Natural killer cell (primary cell): ENCODE measurements at regions of chr7 and their contacts with region 1.

Region 1: DNA sequence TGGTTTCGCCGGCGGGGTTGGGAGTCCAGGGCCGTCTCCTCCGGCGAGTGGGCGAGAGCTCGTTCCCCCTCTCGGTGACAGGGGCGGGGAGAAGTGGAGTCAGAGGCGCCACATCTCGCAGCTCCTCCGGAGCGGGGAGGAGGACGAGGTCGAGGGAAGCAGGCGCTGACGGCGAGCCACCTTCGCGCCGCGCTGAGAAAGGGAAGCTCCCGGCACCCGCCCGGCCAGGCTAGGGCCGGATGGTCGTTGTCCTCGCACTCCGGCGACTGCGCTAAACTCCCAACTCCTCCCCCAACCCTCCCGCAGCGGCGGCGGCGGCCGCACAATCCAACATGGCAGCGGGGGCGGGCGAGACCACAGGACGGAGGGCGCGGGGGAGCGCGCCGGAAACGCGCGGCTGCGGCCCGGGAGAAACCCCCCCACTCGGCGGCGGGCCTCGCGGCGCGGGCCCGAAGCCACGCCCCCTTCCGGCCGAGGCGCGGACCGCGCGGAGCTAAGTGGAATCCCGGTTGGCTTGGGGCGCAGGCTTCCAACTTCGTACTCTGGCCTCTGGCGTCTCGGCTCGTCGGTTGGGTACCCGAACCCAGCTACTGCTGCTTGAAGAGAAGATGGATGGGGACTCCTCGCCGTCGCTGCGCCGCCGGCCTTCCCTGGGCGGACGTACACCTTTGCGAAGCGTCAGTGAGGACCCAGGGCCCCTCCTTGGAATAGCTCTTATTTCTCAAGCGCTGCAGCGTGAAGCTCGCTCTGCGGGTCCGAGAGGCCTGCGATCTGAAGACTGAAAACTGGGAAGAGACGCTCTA is at the start of gene WASL:
- DNase-seq: peak; percentile 86 to 94
- ATAC-seq: peak; percentile 79 to 93 (median 85)
- H3K4me3 ChIP-seq: peak within 1 kb of the TSS; percentile 83
- H3K4me3 Mint-ChIP-seq: peak within 1 kb of the TSS; percentile 94
- H3K27ac ChIP-seq: peak within 1 kb of the TSS; percentile 90
- H3K27ac Mint-ChIP-seq: peak within 1 kb of the TSS; percentile 92
- H3K4me1 ChIP-seq: peaks cover 15% of the 10 kb centered on the region
- H3K4me1 Mint-ChIP-seq: peaks cover 43 to 54% of the 10 kb centered on the region in 2 donors
- H3K27me3 ChIP-seq: no peaks in the 10 kb centered on the region
- H3K27me3 Mint-ChIP-seq: no peaks in the 10 kb centered on the region
- CTCF ChIP-seq: no peak
- total RNA-seq, gene WASL: 9.6 to 12.1 (median 10.6) TPM

Region 2: DNA sequence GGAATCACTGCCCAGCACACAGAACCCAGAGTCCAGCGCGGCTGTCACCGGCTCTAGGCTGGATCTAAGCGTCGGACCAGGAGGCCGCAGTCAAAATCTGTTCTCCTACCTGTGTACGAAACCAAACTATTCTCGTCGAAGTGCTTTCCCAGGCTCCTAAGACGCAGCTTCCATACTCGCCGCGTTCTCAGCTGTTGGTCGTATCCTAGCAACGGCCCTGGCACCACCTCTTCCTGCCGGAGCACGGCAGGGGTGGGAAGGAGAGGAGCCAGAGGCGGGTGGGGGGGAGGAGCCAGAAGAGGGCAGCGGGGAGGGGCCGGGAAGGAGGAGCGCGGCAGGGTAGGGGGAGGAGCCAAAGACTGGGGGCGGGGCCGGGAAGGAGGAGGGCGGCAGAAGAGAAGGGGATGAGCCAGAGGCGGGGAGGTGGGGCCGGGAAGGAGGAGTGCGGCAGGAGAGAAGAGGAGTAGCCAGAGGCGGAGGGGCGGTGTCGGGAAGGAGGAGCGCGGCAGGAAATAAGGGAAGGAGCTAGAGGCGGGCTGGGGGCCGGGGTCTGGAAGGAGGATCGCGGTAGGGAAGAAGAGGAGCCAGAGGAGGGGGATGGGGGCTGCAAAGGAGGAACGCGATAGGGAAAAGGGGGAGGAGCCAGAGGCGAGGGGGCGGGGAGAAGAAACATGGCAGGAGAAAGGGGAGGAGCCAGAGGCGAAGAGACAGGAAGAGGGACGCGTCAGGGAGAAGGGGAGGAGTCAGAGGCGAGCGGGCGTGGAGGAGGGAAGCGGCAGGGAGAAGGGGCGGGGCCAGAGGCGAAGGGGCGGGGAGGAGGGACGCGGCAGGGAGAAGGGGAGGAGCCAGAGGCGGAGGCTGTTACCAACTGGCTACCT is 214.3 kb before region 1 on chr7 and contains the start of gene IQUB:
- intact Hi-C with region 1: loop called (anchors 5 kb)
- DNase-seq: peak; percentile 85 to 97
- ATAC-seq: peak; percentile 87 to 96 (median 90)
- H3K4me3 ChIP-seq: peak within 1 kb of the TSS; percentile 82
- H3K4me3 Mint-ChIP-seq: peak within 1 kb of the TSS; percentile 97
- H3K27ac ChIP-seq: peak within 1 kb of the TSS; percentile 71
- H3K27ac Mint-ChIP-seq: peak within 1 kb of the TSS; percentile 88 to 94
- H3K4me1 ChIP-seq: peaks cover 18% of the 10 kb centered on the region
- H3K4me1 Mint-ChIP-seq: peaks cover 18 to 25% of the 10 kb centered on the region in 2 donors
- H3K27me3 ChIP-seq: peaks cover 2% of the 10 kb centered on the region
- H3K27me3 Mint-ChIP-seq: peaks cover 6% of the 10 kb centered on the region in 2 donors
- CTCF ChIP-seq: no peak
- total RNA-seq, gene IQUB: 0.09 to 0.45 (median 0.18) TPM

Region 3: DNA sequence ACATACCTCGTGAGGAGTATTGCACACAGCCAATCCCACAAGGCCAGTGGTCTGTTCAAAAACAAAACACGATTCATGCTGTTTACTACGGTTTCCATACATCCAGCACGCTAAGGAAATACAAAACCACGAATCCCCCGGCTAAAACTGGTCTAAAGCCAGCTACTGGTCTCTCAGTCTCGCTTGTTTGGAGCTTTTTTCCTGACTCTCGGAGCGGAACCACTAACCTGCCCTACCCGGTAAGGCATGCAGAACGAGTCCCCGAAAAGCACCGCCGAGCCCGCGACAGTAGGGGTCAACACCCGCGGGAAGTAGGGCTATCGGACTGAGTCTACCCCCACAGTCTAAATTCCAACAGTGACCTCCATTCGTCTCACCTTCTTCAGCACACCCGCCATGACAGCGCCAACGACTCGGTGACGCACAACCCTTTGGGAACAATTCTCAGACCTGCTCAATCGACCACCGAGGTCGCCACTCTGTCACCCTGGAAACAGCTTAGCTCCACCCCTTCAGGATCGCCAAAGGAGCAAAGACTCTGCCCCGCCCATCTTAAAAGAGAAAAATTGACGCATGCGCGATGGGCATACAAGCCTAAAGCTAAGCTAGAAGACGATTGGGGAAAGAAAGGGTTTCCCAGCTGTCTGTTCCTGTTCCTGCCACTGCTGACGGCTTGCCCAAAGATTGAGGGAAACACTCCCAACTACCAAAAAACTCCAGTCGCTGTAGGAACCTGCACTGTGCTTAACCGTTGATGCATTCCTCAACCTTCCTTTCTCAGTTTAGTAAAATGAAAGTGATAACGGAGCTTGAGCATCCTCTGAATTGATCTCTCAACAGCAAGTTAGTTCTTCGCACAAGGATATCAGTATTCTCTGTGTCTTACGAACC is 191.3 kb before region 1 on chr7 and contains the start of gene NDUFA5:
- intact Hi-C with region 1: loop called (anchors 2 kb)
- DNase-seq: peak; percentile 88 to 100
- ATAC-seq: peak; percentile 97 to 100 (median 99)
- H3K4me3 ChIP-seq: peak within 1 kb of the TSS; percentile 92
- H3K4me3 Mint-ChIP-seq: no peak within 1 kb of the TSS
- H3K27ac ChIP-seq: peak within 1 kb of the TSS; percentile 77
- H3K27ac Mint-ChIP-seq: no peak within 1 kb of the TSS
- H3K4me1 ChIP-seq: peaks cover 5% of the 10 kb centered on the region
- H3K4me1 Mint-ChIP-seq: peaks cover 0 to 13% of the 10 kb centered on the region in 2 donors
- H3K27me3 ChIP-seq: no peaks in the 10 kb centered on the region
- H3K27me3 Mint-ChIP-seq: peaks cover 0 to 7% of the 10 kb centered on the region in 2 donors
- CTCF ChIP-seq: no peak
- total RNA-seq, gene NDUFA5: 46.0 to 51.2 (median 50.4) TPM

Region 4: GRCh38 chr7:123588376-123588775 is 160.6 kb before region 1 on chr7:
- intact Hi-C with region 1: no loop called
- DNase-seq: no peak
- ATAC-seq: no peak
- H3K4me3 ChIP-seq: no peak overlapping the region
- H3K4me3 Mint-ChIP-seq: no peak overlapping the region
- H3K27ac ChIP-seq: no peak overlapping the region
- H3K27ac Mint-ChIP-seq: no peak overlapping the region
- H3K4me1 ChIP-seq: no peaks in the 10 kb centered on the region
- H3K4me1 Mint-ChIP-seq: no peaks in the 10 kb centered on the region
- H3K27me3 ChIP-seq: no peaks in the 10 kb centered on the region
- H3K27me3 Mint-ChIP-seq: peaks cover 27 to 66% of the 10 kb centered on the region in 2 donors
- CTCF ChIP-seq: no peak

Region 5: GRCh38 chr7:123727071-123727837 is 21.7 kb before region 1 on chr7:
- intact Hi-C with region 1: loop called (anchors 2 kb)
- DNase-seq: no peak
- ATAC-seq: no peak
- H3K4me3 ChIP-seq: no peak overlapping the region
- H3K4me3 Mint-ChIP-seq: no peak overlapping the region
- H3K27ac ChIP-seq: no peak overlapping the region
- H3K27ac Mint-ChIP-seq: peak overlapping the region in 1 of 2 donors; percentile 6
- H3K4me1 ChIP-seq: peaks cover 4% of the 10 kb centered on the region
- H3K4me1 Mint-ChIP-seq: peaks cover 53 to 59% of the 10 kb centered on the region in 2 donors
- H3K27me3 ChIP-seq: no peaks in the 10 kb centered on the region
- H3K27me3 Mint-ChIP-seq: no peaks in the 10 kb centered on the region
- CTCF ChIP-seq: no peak

Region 6: GRCh38 chr7:123770378-123770777 is 21.4 kb after region 1 on chr7:
- intact Hi-C with region 1: no loop called
- DNase-seq: peak in 1 of 2 donors; percentile 25
- ATAC-seq: peak in 1 of 3 donors; percentile 59
- H3K4me3 ChIP-seq: no peak overlapping the region
- H3K4me3 Mint-ChIP-seq: no peak overlapping the region
- H3K27ac ChIP-seq: no peak overlapping the region
- H3K27ac Mint-ChIP-seq: no peak overlapping the region
- H3K4me1 ChIP-seq: no peaks in the 10 kb centered on the region
- H3K4me1 Mint-ChIP-seq: no peaks in the 10 kb centered on the region
- H3K27me3 ChIP-seq: peaks cover 8% of the 10 kb centered on the region
- H3K27me3 Mint-ChIP-seq: peaks cover 21 to 30% of the 10 kb centered on the region in 2 donors
- CTCF ChIP-seq: no peak